Sigmoid colon (tissue), 7 donors: ENCODE measurements at regions of chr15 and their contacts with region 1.

Region 1: DNA sequence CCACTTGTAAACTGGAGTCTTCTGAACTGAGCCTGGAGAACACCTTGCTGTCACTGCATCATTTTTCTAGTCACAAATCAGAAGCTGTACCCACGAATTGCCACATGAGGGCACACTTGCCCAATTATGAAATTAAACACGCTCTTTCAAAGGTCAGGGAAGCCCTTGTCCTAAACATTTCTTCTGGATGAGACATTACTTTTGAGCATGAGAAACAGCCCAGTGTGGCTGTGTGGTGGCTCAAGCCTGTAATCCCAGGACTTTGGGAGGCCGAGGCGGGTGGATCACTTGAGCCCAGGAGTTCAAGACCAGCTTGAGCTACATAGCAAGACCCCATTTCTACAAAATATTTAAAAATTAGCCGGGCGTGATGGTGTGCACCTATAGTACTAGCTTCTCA is 27.5 kb upstream of the CFAP161 start:
- DNase-seq: no peak
- H3K4me3 ChIP-seq: no peak overlapping the region
- H3K27ac ChIP-seq: no peak overlapping the region
- H3K4me1 ChIP-seq: peaks cover 0 to 4% (median 0%) of the 10 kb centered on the region in 4 donors
- H3K27me3 ChIP-seq: no peaks in the 10 kb centered on the region
- CTCF ChIP-seq: peak; percentile 55 to 75 (median 70)
- EP300 ChIP-seq: no peak
- POLR2A ChIP-seq: no peak

Region 2: DNA sequence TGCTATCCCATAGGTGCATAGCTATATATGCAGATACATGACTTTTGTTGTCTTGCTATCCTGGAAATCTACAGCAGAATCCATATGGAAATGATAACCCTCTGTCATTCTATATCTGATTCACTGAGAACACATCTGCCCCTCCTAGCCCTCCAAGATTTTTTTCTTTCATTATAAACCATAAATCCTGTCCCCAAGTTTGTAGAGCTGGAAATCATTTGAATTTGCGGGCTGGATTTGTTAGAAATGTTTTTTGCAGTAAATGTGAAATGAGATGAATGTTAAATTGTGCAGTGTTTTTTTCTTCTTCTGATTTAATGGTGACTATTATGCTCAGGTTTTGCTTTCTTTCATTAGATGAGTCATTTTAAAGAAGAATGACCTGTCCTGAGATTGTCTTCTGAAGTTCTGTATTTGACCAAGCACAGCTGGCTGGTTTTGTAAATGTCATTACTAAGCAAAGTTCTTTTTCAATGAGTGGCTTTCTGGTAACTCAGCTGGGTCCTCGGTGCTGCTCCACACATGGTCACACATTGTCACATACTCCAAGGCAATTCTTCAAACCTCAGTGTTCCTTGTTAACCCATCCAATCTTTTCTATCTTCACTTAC is 436.8 kb before region 1 on chr15:
- intact Hi-C with region 1: no loop called
- DNase-seq: no peak
- H3K4me3 ChIP-seq: no peak overlapping the region
- H3K27ac ChIP-seq: no peak overlapping the region
- H3K4me1 ChIP-seq: no peaks in the 10 kb centered on the region
- H3K27me3 ChIP-seq: no peaks in the 10 kb centered on the region
- CTCF ChIP-seq: no peak
- EP300 ChIP-seq: no peak
- POLR2A ChIP-seq: no peak

Region 3: GRCh38 chr15:80977627-80978036 is 128.9 kb before region 1 on chr15:
- intact Hi-C with region 1: loop called (anchors 5 kb)
- DNase-seq: peak; percentile 72
- H3K4me3 ChIP-seq: no peak overlapping the region
- H3K27ac ChIP-seq: no peak overlapping the region
- H3K4me1 ChIP-seq: peaks cover 0 to 20% (median 5%) of the 10 kb centered on the region in 4 donors
- H3K27me3 ChIP-seq: no peaks in the 10 kb centered on the region
- CTCF ChIP-seq: peak in 3 of 4 experiments; percentile 18 to 47 (median 32)
- EP300 ChIP-seq: no peak
- POLR2A ChIP-seq: no peak

Region 4: GRCh38 chr15:81152339-81152738 is 45.8 kb after region 1 on chr15:
- intact Hi-C with region 1: no loop called
- DNase-seq: no peak
- H3K4me3 ChIP-seq: no peak overlapping the region
- H3K27ac ChIP-seq: no peak overlapping the region
- H3K4me1 ChIP-seq: peaks cover 0 to 6% (median 2%) of the 10 kb centered on the region in 4 donors
- H3K27me3 ChIP-seq: no peaks in the 10 kb centered on the region
- CTCF ChIP-seq: no peak
- EP300 ChIP-seq: no peak
- POLR2A ChIP-seq: no peak

Region 5: GRCh38 chr15:81199031-81199779 is 92.6 kb after region 1 on chr15:
- intact Hi-C with region 1: no loop called
- DNase-seq: no peak
- H3K4me3 ChIP-seq: no peak overlapping the region
- H3K27ac ChIP-seq: no peak overlapping the region
- H3K4me1 ChIP-seq: no peaks in the 10 kb centered on the region
- H3K27me3 ChIP-seq: no peaks in the 10 kb centered on the region
- CTCF ChIP-seq: no peak
- EP300 ChIP-seq: no peak
- POLR2A ChIP-seq: no peak